Caco-2 (cell line): ENCODE measurements at regions of chr22 and their contacts with region 1.

Region 1: GRCh38 chr22:38230108-38230825 is 28.5 kb downstream of the MAFF start:
- DNase-seq: peak in 1 of 2 experiments; percentile 32
- H3K4me3 ChIP-seq: no peak overlapping the region
- H3K4me3 Mint-ChIP-seq: no peak overlapping the region
- H3K27ac Mint-ChIP-seq: no peak overlapping the region
- H3K4me1 ChIP-seq: 0 out of 2 replicates have a peak, but pooled peaks cover 8% of the 10 kb centered on the region
- H3K4me1 Mint-ChIP-seq: peaks cover 6% of the 10 kb centered on the region
- H3K27me3 ChIP-seq: no peaks in the 10 kb centered on the region
- H3K27me3 Mint-ChIP-seq: no peaks in the 10 kb centered on the region
- CTCF ChIP-seq: no peak

Region 2: DNA sequence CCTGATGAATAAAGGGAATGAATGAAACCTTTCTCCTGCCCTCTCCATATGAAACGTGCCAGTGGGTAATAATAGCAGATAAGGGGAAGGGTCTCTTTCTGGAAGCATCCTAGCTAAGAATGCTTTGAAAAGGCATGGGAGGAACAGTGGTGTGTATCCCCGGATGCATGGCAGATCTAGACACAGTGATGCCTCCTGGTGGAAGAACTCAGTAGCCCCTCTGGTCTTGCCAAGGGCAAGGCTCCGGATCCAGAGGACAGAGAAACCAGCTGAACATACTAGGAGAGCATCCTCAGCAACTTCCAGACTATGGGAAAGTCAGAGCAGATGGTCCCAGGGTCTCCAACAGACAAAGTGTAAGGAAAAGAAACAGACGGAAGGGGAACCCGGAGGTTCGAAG is 126.2 kb before region 1 on chr22:
- CTCF ChIA-PET with region 1: no interaction called
- POLR2A ChIA-PET with region 1: no interaction called
- intact Hi-C with region 1: loop called (anchors 1 kb)
- DNase-seq: no peak
- H3K4me3 ChIP-seq: no peak overlapping the region
- H3K4me3 Mint-ChIP-seq: no peak overlapping the region
- H3K27ac Mint-ChIP-seq: no peak overlapping the region
- H3K4me1 ChIP-seq: peaks cover 16% of the 10 kb centered on the region
- H3K4me1 Mint-ChIP-seq: peaks cover 9% of the 10 kb centered on the region
- H3K27me3 ChIP-seq: no peaks in the 10 kb centered on the region
- H3K27me3 Mint-ChIP-seq: no peaks in the 10 kb centered on the region
- CTCF ChIP-seq: peak; percentile 17 to 27